Dorsolateral prefrontal cortex (tissue), 120 donors: ENCODE measurements at regions of chr5 and their contacts with region 1.

Region 1: DNA sequence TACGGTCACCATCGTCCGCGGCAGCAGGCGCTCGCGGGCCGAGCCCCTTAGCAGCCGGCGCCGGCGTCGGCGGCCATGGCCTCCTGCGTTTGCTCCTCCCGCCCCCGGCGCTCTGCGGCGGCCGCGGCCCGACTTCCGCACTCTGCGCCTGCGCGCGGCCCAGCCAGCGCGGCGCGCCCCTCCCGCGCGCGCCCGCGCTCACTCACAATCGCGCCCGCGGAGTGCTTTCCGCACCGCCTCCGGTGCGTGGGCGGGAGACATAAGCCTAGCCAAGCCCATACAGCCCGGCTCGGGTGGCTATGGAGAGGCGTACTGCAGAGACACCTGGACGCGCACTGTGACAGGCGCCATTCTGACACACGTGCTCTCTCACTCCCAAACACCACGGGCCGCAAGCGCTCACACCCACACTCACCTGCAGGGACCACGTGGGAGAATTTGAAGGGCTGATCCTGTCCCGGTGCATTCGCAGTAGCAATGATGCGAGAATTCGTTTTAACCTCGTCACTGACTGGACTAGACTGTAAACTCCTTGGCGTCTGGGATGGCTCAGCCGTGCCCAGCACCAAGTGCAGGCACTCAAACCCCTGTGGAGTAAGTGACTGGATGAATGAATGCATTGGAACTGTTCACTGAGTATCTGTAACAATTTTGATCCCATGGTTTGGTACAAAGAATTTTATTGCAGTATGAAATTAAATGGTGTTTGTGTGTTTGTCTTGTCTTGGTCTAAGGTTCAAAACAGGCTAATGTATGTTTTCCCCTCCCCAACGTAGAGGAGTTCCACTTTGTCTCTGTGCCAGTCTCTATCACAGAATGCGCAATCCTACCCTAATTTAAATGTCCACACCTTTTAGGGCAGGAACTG is at the start of gene RNF145:
- DNase-seq: peak; percentile 70 to 89 (median 86)
- H3K4me3 ChIP-seq: peak within 1 kb of the TSS; percentile 67 to 94 (median 85)
- H3K27ac ChIP-seq: peak within 1 kb of the TSS; percentile 48 to 97 (median 91)
- H3K27me3 ChIP-seq: no peaks in the 10 kb centered on the region
- CTCF ChIP-seq: peak in 10 of 56 donors; percentile 0 to 31 (median 8)
- total RNA-seq, gene RNF145: 47.7 to 107 (median 74.3) TPM

Region 2: GRCh38 chr5:158560170-158560569 is 649.5 kb before region 1 on chr5:
- intact Hi-C with region 1: no loop called
- DNase-seq: no peak
- H3K4me3 ChIP-seq: no peak overlapping the region
- H3K27ac ChIP-seq: no peak overlapping the region
- H3K27me3 ChIP-seq: peaks cover 0 to 7% (median 0%) of the 10 kb centered on the region in 45 donors
- CTCF ChIP-seq: no peak

Region 3: GRCh38 chr5:159034083-159034824 is 175.4 kb before region 1 on chr5:
- intact Hi-C with region 1: no loop called
- DNase-seq: no peak
- H3K4me3 ChIP-seq: no peak overlapping the region
- H3K27ac ChIP-seq: peak overlapping the region in 6 of 59 donors; percentile 6 to 59 (median 28)
- H3K27me3 ChIP-seq: peaks cover 0 to 13% (median 0%) of the 10 kb centered on the region in 45 donors
- CTCF ChIP-seq: no peak

Region 4: DNA sequence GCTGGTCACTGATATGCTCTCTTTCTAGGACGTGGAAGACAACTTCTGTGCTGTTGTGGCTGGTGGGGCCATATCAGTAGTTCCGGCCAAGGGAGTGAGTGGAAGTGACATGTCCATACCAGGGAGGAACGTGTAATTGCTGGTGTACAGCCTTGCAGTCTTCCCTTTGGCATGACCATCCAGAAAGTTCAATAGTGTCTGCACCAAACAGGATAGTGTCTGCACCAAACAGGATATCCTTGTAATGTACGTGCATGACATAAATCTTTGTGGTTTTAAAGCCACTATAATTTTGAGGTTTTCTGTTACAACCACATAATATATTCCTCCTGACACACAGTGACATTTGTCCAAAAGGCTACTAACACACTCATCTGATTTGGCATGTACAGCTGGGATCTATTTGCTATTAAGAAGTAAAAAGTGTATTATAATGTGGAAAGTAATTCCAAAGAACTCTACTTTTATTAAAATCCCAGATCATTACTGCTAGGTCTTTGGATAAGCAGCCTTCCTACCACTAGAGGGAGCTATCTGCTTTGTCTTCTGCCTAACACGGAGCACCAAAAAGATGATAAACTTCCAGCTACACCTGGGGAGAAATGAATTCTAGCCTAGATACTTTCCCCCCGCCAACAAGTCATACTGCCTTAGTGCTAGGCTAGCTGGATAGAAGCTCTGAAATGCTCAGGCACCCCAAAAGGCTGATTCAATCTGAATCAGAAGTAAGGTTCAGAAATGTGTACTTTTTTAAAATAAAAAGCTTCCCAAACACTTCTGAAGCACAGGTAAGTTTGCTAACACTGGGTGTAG is 53.0 kb before region 1 on chr5:
- intact Hi-C with region 1: loop called in 1 of 2 experiments (anchors 10 kb)
- DNase-seq: peak in 1 of 10 donors; percentile 47
- H3K4me3 ChIP-seq: no peak overlapping the region
- H3K27ac ChIP-seq: no peak overlapping the region
- H3K27me3 ChIP-seq: no peaks in the 10 kb centered on the region
- CTCF ChIP-seq: peak; percentile 67 to 94 (median 87)

Region 5: GRCh38 chr5:159174511-159175168 is 35.0 kb before region 1 on chr5:
- intact Hi-C with region 1: loop called in 1 of 2 experiments (anchors 5 kb)
- DNase-seq: no peak
- H3K4me3 ChIP-seq: no peak overlapping the region
- H3K27ac ChIP-seq: no peak overlapping the region
- H3K27me3 ChIP-seq: no peaks in the 10 kb centered on the region
- CTCF ChIP-seq: no peak

Region 6: GRCh38 chr5:159412284-159413046 is 202.8 kb after region 1 on chr5:
- intact Hi-C with region 1: no loop called
- DNase-seq: no peak
- H3K4me3 ChIP-seq: no peak overlapping the region
- H3K27ac ChIP-seq: no peak overlapping the region
- H3K27me3 ChIP-seq: no peaks in the 10 kb centered on the region
- CTCF ChIP-seq: no peak